ENCODE measurements at regions of chr15 and their contacts with region 1.

Region 1: GRCh38 chr15:89556413-89557262 is 18.6 kb upstream of the TICRR start:
- DNase-seq: peak in 1 of 2 donors; percentile 60
- H3K4me3 ChIP-seq: no peak overlapping the region
- CTCF ChIP-seq: peak in 1 of 3 donors; percentile 15
- POLR2A ChIP-seq: no peak

Region 2: DNA sequence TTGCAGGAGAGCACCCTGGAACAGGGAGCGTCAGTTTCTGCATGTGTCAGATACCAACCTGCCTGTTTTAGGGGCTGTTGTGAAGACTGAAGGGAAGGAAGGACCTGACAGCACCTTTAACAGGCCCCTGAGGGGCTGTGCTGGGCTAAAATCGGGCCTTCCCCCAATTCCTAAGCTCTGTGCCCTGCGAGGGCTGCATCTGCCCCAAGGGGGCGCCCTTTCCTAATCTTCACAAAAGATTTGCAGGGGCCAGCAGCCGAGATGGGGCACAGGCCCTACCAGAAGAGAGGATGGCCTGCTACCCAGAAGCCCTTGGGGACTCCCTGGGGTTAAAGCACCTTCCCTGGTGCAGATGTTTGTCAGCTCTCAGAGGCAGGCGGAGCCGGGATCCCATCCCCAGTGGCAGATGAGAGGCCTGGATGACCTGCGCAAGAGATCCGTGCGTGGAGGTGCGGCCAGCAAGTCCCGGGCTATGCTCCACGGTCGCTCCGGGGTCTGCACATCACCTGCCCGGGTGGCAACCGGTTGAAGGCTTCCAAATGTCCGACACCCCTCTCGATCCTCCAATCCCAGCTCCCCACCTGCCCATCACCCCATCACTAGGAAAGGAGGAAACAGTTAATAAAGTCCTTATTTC is 113.8 kb before region 1 on chr15:
- intact Hi-C with region 1: loop called (anchors 5 kb)
- DNase-seq: no peak
- H3K4me3 ChIP-seq: no peak overlapping the region
- CTCF ChIP-seq: no peak
- POLR2A ChIP-seq: no peak

Region 3: GRCh38 chr15:89496155-89497098 is 60.2 kb before region 1 on chr15 and contains the start of gene RHCG:
- intact Hi-C with region 1: loop called (anchors 10 kb)
- DNase-seq: peak in 1 of 2 donors; percentile 83
- H3K4me3 ChIP-seq: no peak within 1 kb of the TSS
- CTCF ChIP-seq: no peak
- POLR2A ChIP-seq: no peak
- total RNA-seq, gene RHCG: 1.3 to 29.0 (median 23.7) TPM